B cell (primary cell): ENCODE measurements at regions of chr6 and their contacts with region 1.

Region 1: DNA sequence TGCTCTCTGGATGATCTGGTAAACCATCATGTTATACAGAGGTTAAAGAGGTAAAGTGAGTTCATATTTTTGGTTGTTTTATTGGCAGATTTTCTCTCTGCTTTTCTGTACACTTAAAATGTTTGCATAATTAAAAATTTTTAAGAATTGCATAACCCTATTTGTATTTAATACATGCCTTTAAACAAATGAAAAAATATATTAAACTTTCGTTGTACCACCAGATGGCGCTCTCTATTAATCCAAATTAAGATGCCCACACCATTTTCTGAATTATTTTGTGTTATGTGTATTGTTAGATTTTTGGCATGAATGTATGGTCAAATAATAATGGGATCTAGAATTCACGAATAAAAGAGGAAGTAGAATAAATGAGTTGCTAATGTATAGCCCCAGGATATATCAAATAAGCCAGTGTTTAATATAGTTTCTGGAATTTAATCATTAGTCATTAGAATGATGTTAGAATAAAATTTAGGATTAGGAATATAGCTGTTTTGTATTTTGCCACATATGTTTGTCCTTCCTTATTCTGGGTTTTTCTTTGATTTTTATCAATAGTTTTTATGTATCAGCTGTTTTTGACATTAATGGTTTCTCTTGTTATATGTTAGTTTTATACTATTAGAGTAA is 38.9 kb downstream of the SMAP1 start:
- DNase-seq: peak; percentile 62
- ATAC-seq: no peak
- H3K4me3 ChIP-seq: no peak overlapping the region
- H3K4me3 Mint-ChIP-seq: no peak overlapping the region
- H3K27ac ChIP-seq: no peak overlapping the region
- H3K27ac Mint-ChIP-seq: no peak overlapping the region
- H3K4me1 ChIP-seq: no peaks in the 10 kb centered on the region
- H3K4me1 Mint-ChIP-seq: peaks cover 23% of the 10 kb centered on the region
- H3K27me3 ChIP-seq: no peaks in the 10 kb centered on the region
- H3K27me3 Mint-ChIP-seq: no peaks in the 10 kb centered on the region
- CTCF ChIP-seq: peak; percentile 97

Region 2: GRCh38 chr6:70717038-70717801 is 10.6 kb after region 1 on chr6:
- CTCF ChIA-PET with region 1: interaction called, 13 read pairs
- POLR2A ChIA-PET with region 1: no interaction called
- intact Hi-C with region 1: no loop called
- DNase-seq: peak; percentile 27
- ATAC-seq: no peak
- H3K4me3 ChIP-seq: no peak overlapping the region
- H3K4me3 Mint-ChIP-seq: peak overlapping the region; percentile 15
- H3K27ac ChIP-seq: no peak overlapping the region
- H3K27ac Mint-ChIP-seq: peak overlapping the region; percentile 28
- H3K4me1 ChIP-seq: peaks cover 8 to 18% of the 10 kb centered on the region in 2 donors
- H3K4me1 Mint-ChIP-seq: peaks cover 48% of the 10 kb centered on the region
- H3K27me3 ChIP-seq: no peaks in the 10 kb centered on the region
- H3K27me3 Mint-ChIP-seq: no peaks in the 10 kb centered on the region
- CTCF ChIP-seq: no peak

Region 3: GRCh38 chr6:70955441-70956190 is 249.0 kb after region 1 on chr6:
- CTCF ChIA-PET with region 1: interaction called, 34 read pairs
- POLR2A ChIA-PET with region 1: no interaction called
- intact Hi-C with region 1: no loop called
- DNase-seq: peak; percentile 85
- ATAC-seq: peak; percentile 95
- H3K4me3 ChIP-seq: peak overlapping the region in 4 of 5 experiments; percentile 36 to 66 (median 50)
- H3K4me3 Mint-ChIP-seq: peak overlapping the region; percentile 82
- H3K27ac ChIP-seq: no peak overlapping the region
- H3K27ac Mint-ChIP-seq: no peak overlapping the region
- H3K4me1 ChIP-seq: peaks cover 22 to 24% of the 10 kb centered on the region in 2 donors
- H3K4me1 Mint-ChIP-seq: peaks cover 26% of the 10 kb centered on the region
- H3K27me3 ChIP-seq: peaks cover 0 to 41% (median 19%) of the 10 kb centered on the region in 4 experiments
- H3K27me3 Mint-ChIP-seq: peaks cover 58% of the 10 kb centered on the region
- CTCF ChIP-seq: peak; percentile 85

Region 4: GRCh38 chr6:71012866-71013469 is 306.4 kb after region 1 on chr6:
- CTCF ChIA-PET with region 1: interaction called, 10 read pairs
- POLR2A ChIA-PET with region 1: no interaction called
- intact Hi-C with region 1: loop called (anchors 2 kb)
- DNase-seq: peak; percentile 64
- ATAC-seq: no peak
- H3K4me3 ChIP-seq: no peak overlapping the region
- H3K4me3 Mint-ChIP-seq: no peak overlapping the region
- H3K27ac ChIP-seq: no peak overlapping the region
- H3K27ac Mint-ChIP-seq: no peak overlapping the region
- H3K4me1 ChIP-seq: peaks cover 0 to 3% of the 10 kb centered on the region in 2 donors
- H3K4me1 Mint-ChIP-seq: peaks cover 2% of the 10 kb centered on the region
- H3K27me3 ChIP-seq: peaks cover 0 to 13% (median 0%) of the 10 kb centered on the region in 4 experiments
- H3K27me3 Mint-ChIP-seq: peaks cover 14% of the 10 kb centered on the region
- CTCF ChIP-seq: peak; percentile 84